ENCODE measurements at regions of chr14 and their contacts with region 1.

Region 1: GRCh38 chr14:59055439-59056045 is 132.9 kb upstream of the DAAM1 start:
- DNase-seq: peak in 4 of 5 donors; percentile 2 to 21 (median 16)
- H3K4me3 ChIP-seq: no peak overlapping the region
- H3K4me3 Mint-ChIP-seq: no peak overlapping the region
- H3K27ac ChIP-seq: no peak overlapping the region
- H3K27ac Mint-ChIP-seq: no peak overlapping the region
- H3K4me1 ChIP-seq: no peaks in the 10 kb centered on the region
- H3K4me1 Mint-ChIP-seq: no peaks in the 10 kb centered on the region
- H3K27me3 ChIP-seq: no peaks in the 10 kb centered on the region
- H3K27me3 Mint-ChIP-seq: peaks cover 4 to 5% of the 10 kb centered on the region in 2 donors

Region 2: DNA sequence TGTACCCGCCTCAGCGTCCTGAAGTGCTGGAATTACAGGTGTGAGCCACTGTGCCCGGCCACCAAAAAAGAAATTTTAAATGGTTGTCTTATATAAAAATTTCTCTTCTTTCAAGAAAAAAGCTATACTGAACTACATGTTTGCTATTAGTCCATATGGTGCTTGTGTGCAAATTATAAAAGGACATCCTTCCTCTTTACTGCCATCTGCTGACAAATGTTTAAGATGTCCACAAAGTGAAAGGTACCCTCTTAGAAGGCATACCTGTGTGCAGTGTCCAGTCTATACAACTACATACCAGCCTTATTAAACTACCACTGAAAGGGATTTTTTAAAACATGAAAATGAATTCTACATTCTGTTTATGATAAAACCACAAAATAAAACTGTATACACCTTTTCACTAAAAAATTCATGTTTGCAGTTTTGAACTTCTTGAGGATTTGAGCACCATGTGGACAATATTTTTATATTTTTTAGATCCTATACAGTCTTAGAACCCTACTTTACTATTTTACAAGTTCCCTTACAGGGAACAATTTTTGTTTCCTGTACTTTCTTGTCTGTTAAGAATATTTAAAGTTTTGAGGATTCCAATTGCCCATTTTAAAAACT is 692.6 kb before region 1 on chr14:
- CTCF ChIA-PET with region 1: no interaction called
- POLR2A ChIA-PET with region 1: no interaction called
- intact Hi-C with region 1: loop called (anchors 5 kb)
- DNase-seq: peak in 4 of 5 donors; percentile 25 to 33 (median 28)
- H3K4me3 ChIP-seq: no peak overlapping the region
- H3K4me3 Mint-ChIP-seq: no peak overlapping the region
- H3K27ac ChIP-seq: no peak overlapping the region
- H3K27ac Mint-ChIP-seq: peak overlapping the region in 2 of 7 donors; percentile 17 to 19
- H3K4me1 ChIP-seq: no peaks in the 10 kb centered on the region
- H3K4me1 Mint-ChIP-seq: peaks cover 0 to 1% (median 0%) of the 10 kb centered on the region in 4 donors
- H3K27me3 ChIP-seq: no peaks in the 10 kb centered on the region
- H3K27me3 Mint-ChIP-seq: no peaks in the 10 kb centered on the region

Region 3: DNA sequence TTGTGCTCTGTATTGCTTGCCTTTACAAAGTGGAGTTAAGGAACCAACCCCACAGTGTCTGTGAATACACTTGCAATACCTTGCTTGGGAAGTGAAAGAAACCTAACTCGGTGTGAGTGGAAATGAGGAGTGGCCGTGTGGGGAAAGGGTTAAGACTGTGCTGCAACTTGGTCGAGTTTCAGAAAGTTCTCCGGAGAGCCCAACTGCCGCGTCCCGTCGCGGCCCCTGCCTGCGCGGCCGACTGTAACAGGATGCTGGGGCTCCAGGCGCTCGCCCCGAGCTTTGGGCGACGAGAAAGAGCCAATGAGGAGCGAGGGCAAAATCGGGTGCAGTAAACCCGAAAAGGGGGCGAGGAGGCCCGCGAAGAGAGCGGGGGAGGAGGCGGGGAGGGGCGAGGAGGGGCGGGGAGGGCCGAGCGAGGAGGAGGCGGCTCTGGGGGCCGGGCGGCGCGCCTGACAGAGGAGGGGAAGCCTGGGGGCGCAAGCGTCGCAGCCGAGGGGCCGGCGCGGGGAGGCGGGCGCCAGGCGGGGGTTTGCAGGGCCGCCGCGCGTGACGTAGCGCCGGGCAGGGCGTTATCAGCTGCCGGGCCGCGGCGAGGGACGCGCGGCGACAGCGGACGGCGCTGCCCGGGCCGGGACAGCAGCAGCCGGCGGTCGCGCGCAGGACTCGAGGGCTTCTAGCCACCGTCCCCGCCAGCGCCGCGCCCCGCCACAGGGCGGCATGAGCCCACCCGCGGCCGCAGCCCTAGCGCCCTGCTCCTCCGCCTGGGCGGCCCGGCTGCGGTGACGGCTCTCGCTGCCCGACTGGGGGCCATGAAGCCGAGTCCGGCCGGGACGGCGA is 417.9 kb before region 1 on chr14 and contains the start of gene DACT1:
- CTCF ChIA-PET with region 1: no interaction called
- POLR2A ChIA-PET with region 1: no interaction called
- intact Hi-C with region 1: loop called (anchors 5 kb)
- DNase-seq: peak; percentile 16 to 40 (median 19)
- H3K4me3 ChIP-seq: peak within 1 kb of the TSS in 1 of 2 donors; percentile 5
- H3K4me3 Mint-ChIP-seq: peak within 1 kb of the TSS; percentile 76 to 92 (median 88)
- H3K27ac ChIP-seq: no peak within 1 kb of the TSS
- H3K27ac Mint-ChIP-seq: peak within 1 kb of the TSS in 4 of 7 donors; percentile 52 to 82 (median 66)
- H3K4me1 ChIP-seq: peaks cover 9% of the 10 kb centered on the region
- H3K4me1 Mint-ChIP-seq: peaks cover 6 to 29% (median 18%) of the 10 kb centered on the region in 4 donors
- H3K27me3 ChIP-seq: peaks cover 23% of the 10 kb centered on the region
- H3K27me3 Mint-ChIP-seq: peaks cover 31 to 44% of the 10 kb centered on the region in 2 donors
- total RNA-seq, gene DACT1: 1.4 to 1.8 TPM

Region 4: GRCh38 chr14:58969951-58970751 is 85.4 kb before region 1 on chr14:
- CTCF ChIA-PET with region 1: no interaction called
- POLR2A ChIA-PET with region 1: no interaction called
- intact Hi-C with region 1: no loop called
- DNase-seq: no peak
- H3K4me3 ChIP-seq: no peak overlapping the region
- H3K4me3 Mint-ChIP-seq: no peak overlapping the region
- H3K27ac ChIP-seq: no peak overlapping the region
- H3K27ac Mint-ChIP-seq: no peak overlapping the region
- H3K4me1 ChIP-seq: no peaks in the 10 kb centered on the region
- H3K4me1 Mint-ChIP-seq: no peaks in the 10 kb centered on the region
- H3K27me3 ChIP-seq: no peaks in the 10 kb centered on the region
- H3K27me3 Mint-ChIP-seq: peaks cover 0 to 1% of the 10 kb centered on the region in 2 donors

Region 5: GRCh38 chr14:59254146-59254941 is 198.8 kb after region 1 on chr14:
- CTCF ChIA-PET with region 1: no interaction called
- POLR2A ChIA-PET with region 1: no interaction called
- intact Hi-C with region 1: no loop called
- DNase-seq: no peak
- H3K4me3 ChIP-seq: no peak overlapping the region
- H3K4me3 Mint-ChIP-seq: no peak overlapping the region
- H3K27ac ChIP-seq: no peak overlapping the region
- H3K27ac Mint-ChIP-seq: no peak overlapping the region
- H3K4me1 ChIP-seq: no peaks in the 10 kb centered on the region
- H3K4me1 Mint-ChIP-seq: peaks cover 4 to 7% (median 6%) of the 10 kb centered on the region in 4 donors
- H3K27me3 ChIP-seq: no peaks in the 10 kb centered on the region
- H3K27me3 Mint-ChIP-seq: no peaks in the 10 kb centered on the region